ENCODE measurements at regions of chr11 and their contacts with region 1.

Region 1: GRCh38 chr11:63944987-63945386 is 6.2 kb downstream of the NAA40 start:
- DNase-seq: peak; percentile 76
- H3K4me3 ChIP-seq: peak overlapping the region; percentile 19
- H3K27ac ChIP-seq: peak overlapping the region; percentile 61
- H3K4me1 ChIP-seq: peaks cover 12% of the 10 kb centered on the region
- H3K27me3 ChIP-seq: no peaks in the 10 kb centered on the region

Region 2: DNA sequence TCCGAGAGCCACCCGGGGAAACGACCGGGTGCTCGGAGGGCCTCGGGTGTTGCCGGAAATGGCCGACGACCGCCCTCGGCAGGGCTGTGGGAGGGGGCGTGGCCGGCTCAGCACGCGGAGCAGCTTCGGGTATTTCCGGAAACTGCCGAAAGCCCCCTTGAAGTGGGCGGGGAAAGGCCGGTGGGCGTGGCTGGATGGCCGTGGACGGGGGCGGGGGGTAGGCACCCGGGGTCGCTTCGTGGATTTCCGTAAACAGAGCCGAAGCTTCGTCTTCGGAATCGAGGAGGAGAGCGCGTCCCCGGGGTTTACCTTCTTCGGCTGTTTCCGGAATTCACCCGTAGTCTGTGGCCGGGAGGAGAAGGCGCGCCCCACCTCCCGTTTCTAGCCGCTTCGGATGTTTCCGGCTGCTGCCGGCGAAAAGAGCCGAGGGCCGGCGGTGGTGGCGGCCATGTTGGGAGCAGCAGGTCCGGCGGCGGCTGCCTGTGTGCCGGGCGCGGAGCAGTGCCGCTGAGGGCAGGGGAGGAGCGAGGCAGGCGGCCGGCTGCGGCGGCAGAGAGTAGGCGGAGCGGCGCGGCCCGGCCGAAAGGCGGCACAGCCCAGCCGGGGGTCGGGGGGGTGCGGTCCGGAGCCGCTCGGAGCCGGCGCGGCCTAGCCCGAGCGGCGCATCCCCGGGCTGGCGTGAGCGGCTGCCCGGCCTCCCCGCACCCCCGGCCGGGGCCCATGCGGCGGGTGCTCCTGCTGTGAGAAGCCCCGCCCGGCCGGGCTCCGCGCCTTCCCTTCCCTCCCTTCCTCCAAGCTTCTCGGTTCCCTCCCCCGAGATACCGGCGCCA is 106.1 kb before region 1 on chr11 and contains the start of gene MARK2:
- in situ Hi-C with region 1: loop called (anchors 5 kb)
- DNase-seq: peak; percentile 99
- H3K4me3 ChIP-seq: peak within 1 kb of the TSS; percentile 95
- H3K27ac ChIP-seq: peak within 1 kb of the TSS; percentile 40
- H3K4me1 ChIP-seq: peaks cover 16% of the 10 kb centered on the region
- H3K27me3 ChIP-seq: no peaks in the 10 kb centered on the region
- total RNA-seq, gene MARK2: 14.8 and 15.8 TPM in 2 replicates

Region 3: GRCh38 chr11:63888170-63889086 is 56.6 kb before region 1 on chr11:
- in situ Hi-C with region 1: no loop called
- DNase-seq: peak; percentile 78
- H3K4me3 ChIP-seq: peak overlapping the region; percentile 48
- H3K27ac ChIP-seq: peak overlapping the region; percentile 65
- H3K4me1 ChIP-seq: peaks cover 25% of the 10 kb centered on the region
- H3K27me3 ChIP-seq: no peaks in the 10 kb centered on the region

Measured in GM23248 (cell line).